WTC11 (cell line): ENCODE measurements at regions of chr1 and their contacts with region 1.

Region 1: GRCh38 chr1:18956369-18957135 is at the start of gene IFFO2:
- DNase-seq: peak; percentile 99
- ATAC-seq: peak; percentile 91
- H3K4me3 Mint-ChIP-seq: peak within 1 kb of the TSS; percentile 86
- H3K27ac Mint-ChIP-seq: no peak within 1 kb of the TSS
- H3K4me1 Mint-ChIP-seq: peaks cover 18% of the 10 kb centered on the region
- H3K27me3 Mint-ChIP-seq: peaks cover 59% of the 10 kb centered on the region
- CTCF ChIP-seq: no peak
- total RNA-seq, gene IFFO2: 6.5 to 8.1 TPM (median 6.9 TPM) in 3 replicates

Region 2: GRCh38 chr1:18941221-18942141 is 15.1 kb before region 1 on chr1:
- CTCF ChIA-PET with region 1: interaction called, 13 read pairs
- POLR2A ChIA-PET with region 1: interaction called, 5 read pairs
- DNase-seq: no peak
- ATAC-seq: peak; percentile 36
- H3K4me3 Mint-ChIP-seq: peak overlapping the region; percentile 4; the same call in 1 of the 2 replicates
- H3K27ac Mint-ChIP-seq: peak overlapping the region; percentile 73
- H3K4me1 Mint-ChIP-seq: peaks cover 50% of the 10 kb centered on the region
- H3K27me3 Mint-ChIP-seq: no peaks in the 10 kb centered on the region
- CTCF ChIP-seq: no peak